ENCODE measurements at regions of chr6 and their contacts with region 1.

Region 1: DNA sequence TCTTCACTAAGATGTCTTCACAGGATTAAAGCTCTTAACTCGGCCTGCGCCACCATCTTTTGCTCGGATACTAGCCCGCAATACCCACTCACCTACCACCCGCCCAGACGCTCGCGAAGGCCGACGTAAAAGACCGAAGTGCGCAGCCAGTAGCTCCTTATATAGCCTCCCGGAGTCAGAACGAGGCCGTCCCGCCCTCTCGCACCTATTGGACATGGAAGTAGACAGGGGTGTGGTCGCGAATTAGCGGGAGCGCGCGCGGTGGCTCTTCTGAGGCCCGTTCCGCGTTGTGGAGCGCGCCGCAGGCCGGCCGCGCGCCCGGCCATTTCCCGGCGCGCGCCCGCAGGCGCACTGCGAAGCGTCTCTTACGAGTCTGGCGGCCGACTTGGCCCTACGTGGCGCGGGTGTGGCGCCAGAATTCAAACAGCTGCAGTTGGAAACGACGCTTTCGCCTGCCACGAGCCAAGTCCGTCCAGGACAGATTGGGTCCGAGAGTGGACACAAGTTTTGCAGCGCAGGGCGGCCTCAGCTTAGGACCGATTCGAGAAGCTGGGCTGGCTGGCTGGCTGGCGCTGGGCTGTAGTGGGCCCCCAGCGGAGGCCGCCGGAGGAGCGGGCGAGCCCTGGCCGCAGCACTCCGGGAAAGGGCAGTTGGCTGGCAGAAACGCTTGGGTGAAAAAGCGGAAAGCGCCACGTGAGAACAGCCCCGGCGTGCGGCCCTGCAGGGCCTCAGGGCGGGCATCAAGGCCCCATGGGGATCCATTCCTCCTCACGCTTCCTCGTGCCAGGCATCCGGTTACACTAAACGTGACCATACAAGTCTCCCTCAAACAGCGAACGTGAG is 36.1 kb upstream of the SYNCRIP start:
- DNase-seq: peak; percentile 96 to 99
- H3K4me3 ChIP-seq: peak overlapping the region; percentile 90
- H3K27ac ChIP-seq: peak overlapping the region; percentile 91 to 94
- H3K4me1 ChIP-seq: peaks cover 0 to 21% of the 10 kb centered on the region in 2 donors
- H3K27me3 ChIP-seq: no peaks in the 10 kb centered on the region
- CTCF ChIP-seq: no peak

Region 2: GRCh38 chr6:85460921-85461797 is 217.7 kb before region 1 on chr6:
- intact Hi-C with region 1: loop called (anchors 10 kb)
- DNase-seq: no peak
- H3K4me3 ChIP-seq: no peak overlapping the region
- H3K27ac ChIP-seq: peak overlapping the region; percentile 90 to 93
- H3K4me1 ChIP-seq: peaks cover 19 to 82% of the 10 kb centered on the region in 2 donors
- H3K27me3 ChIP-seq: no peaks in the 10 kb centered on the region
- CTCF ChIP-seq: no peak

Region 3: DNA sequence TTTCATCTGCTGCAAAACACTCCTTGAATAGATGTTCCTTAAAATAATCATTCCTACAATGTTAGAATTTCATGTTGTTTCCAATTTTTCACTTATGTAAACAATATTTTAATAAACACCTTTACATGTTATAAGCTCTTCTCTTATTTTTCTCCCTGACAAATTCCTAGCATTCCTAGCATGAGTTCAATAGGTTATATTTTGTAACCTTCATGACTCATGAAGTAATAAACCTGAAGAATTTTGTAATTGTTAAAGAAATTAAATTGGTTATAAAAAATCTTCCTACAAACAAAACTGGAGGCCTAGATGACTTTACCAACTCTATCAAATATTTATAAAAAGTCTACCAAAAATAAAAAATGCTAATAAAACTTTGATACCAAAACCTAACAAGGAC is 162.7 kb before region 1 on chr6:
- intact Hi-C with region 1: no loop called
- DNase-seq: no peak
- H3K4me3 ChIP-seq: no peak overlapping the region
- H3K27ac ChIP-seq: no peak overlapping the region
- H3K4me1 ChIP-seq: no peaks in the 10 kb centered on the region
- H3K27me3 ChIP-seq: no peaks in the 10 kb centered on the region
- CTCF ChIP-seq: no peak

Region 4: GRCh38 chr6:85593438-85594196 is 85.2 kb before region 1 on chr6 and contains the start of gene SNX14:
- intact Hi-C with region 1: loop called (anchors 1 kb)
- DNase-seq: peak; percentile 78 to 97
- H3K4me3 ChIP-seq: peak within 1 kb of the TSS; percentile 66 to 87
- H3K27ac ChIP-seq: peak within 1 kb of the TSS; percentile 95 to 96
- H3K4me1 ChIP-seq: peaks cover 0 to 15% of the 10 kb centered on the region in 2 donors
- H3K27me3 ChIP-seq: no peaks in the 10 kb centered on the region
- CTCF ChIP-seq: peak in 1 of 3 experiments; percentile 25
- total RNA-seq, gene SNX14: 63.2 TPM

Region 5: DNA sequence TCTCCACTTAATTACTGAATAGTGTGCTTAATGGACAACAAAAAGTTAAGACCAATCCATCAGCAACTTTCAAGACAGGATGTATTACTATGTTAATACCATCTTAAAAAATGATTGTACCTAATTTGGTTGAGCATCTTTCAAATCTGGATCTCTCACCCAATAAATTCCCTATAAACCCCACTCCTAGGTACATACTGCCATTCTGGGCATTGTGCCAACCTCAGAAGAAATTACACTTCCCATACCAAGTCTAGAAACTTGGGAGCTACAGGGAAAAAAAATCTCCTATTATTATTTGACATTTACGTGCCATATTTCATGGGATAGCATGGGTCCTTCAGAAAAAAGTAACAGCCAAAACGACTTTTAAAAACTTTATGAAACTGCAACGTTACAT is 41.2 kb before region 1 on chr6:
- intact Hi-C with region 1: no loop called
- DNase-seq: no peak
- H3K4me3 ChIP-seq: no peak overlapping the region
- H3K27ac ChIP-seq: no peak overlapping the region
- H3K4me1 ChIP-seq: peaks cover 0 to 13% of the 10 kb centered on the region in 2 donors
- H3K27me3 ChIP-seq: no peaks in the 10 kb centered on the region
- CTCF ChIP-seq: no peak

Region 6: DNA sequence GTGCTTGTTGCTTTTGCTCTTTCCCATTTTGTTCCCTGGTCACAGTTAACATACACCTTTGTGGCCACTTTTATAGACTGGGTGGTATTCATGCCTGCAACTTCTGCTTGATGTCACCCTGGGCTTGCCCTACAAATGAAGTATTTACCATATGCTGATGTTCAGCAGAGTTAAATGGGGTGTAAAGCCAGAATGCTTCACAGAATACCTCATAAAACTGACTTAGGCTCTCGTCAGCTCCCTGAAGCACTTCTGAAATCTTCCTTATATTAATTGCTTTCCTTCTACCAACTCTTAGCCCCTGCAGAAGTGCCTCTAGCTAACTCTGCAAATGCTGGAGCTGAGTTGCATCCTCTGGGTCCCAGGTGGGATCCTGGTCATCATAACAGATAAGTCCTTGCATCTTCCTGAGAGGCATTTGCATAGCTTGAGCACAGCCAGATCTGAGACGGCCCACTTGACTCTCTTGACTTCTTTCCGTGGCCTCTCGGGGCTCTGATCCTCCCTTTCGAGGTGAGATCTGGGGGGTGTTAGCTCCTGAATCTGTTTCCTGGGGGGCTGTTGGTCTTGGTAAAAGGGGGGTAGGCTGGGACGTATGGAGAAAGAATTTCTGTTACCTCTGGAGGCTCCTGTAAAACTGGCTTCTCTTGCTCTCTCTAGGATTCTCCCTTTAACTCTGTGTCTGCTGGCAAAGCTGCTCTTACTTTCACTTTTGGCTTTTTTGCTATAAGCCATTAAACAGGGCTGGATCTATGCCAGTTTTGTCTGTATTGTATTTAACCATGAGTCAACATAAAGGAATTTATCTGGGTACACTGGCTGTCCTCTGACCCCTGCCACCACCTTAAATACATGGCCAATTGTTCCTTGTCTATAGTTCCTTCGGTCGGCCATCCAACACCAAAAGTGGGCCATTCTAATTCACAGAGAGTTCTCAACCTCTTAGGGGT is 186.9 kb after region 1 on chr6:
- intact Hi-C with region 1: loop called (anchors 2 kb)
- DNase-seq: no peak
- H3K4me3 ChIP-seq: peak overlapping the region; percentile 45 to 68
- H3K27ac ChIP-seq: peak overlapping the region; percentile 82 to 85
- H3K4me1 ChIP-seq: peaks cover 0 to 19% of the 10 kb centered on the region in 2 donors
- H3K27me3 ChIP-seq: no peaks in the 10 kb centered on the region
- CTCF ChIP-seq: no peak